ENCODE measurements at regions of chr4 and their contacts with region 1.

Region 1: DNA sequence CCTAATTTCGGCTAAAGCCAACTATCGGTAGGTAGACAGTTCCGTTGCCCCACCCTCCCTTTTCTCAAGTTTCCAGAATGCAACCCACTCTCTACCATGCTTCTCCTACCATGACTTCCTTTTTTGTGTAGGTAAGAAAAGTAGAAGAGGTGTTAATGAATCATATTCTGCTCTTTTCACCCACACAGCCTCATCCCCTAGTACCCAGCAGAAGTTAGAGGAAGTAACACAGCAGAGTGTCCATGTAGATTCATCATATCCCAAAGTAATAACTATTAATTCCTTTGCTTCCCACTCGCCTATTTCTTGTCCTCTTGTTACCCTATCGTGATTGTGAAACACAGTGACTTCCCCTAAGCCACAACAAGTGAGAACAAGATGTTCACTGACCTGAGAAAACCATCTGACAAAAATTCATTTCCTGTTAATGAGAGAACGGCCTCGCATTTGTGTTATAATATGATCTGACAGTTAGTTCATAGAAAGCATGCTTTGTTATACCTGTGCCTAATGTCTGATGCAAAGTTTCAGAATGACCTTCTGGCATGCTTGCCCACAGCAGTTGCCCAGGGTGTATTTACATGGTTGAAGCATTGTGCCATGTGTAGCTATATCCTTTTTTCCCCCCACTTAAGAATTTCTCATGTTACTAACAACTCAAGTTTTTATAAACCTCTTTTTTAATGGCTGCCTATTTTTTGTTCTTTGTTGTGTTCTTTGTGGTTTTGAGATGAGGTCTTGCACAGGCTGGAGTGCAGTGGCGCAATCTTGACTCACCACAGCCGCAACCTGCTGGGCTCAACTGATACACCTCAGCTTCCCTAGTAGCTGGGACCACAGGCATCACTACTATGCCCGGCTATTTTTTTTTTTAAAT is 185.6 kb downstream of the RAP1GDS1 start:
- DNase-seq: peak; percentile 81
- H3K4me3 Mint-ChIP-seq: peak overlapping the region; percentile 48
- H3K27ac Mint-ChIP-seq: peak overlapping the region; percentile 87
- H3K4me1 Mint-ChIP-seq: peaks cover 35% of the 10 kb centered on the region
- H3K27me3 Mint-ChIP-seq: no peaks in the 10 kb centered on the region

Region 2: GRCh38 chr4:98143001-98143899 is 303.5 kb before region 1 on chr4 and contains the start of gene STPG2:
- CTCF ChIA-PET with region 1: no interaction called
- POLR2A ChIA-PET with region 1: no interaction called
- intact Hi-C with region 1: loop called (anchors 2 kb)
- DNase-seq: peak; percentile 95
- H3K4me3 Mint-ChIP-seq: peak within 1 kb of the TSS; percentile 95
- H3K27ac Mint-ChIP-seq: peak within 1 kb of the TSS; percentile 98
- H3K4me1 Mint-ChIP-seq: peaks cover 20% of the 10 kb centered on the region
- H3K27me3 Mint-ChIP-seq: no peaks in the 10 kb centered on the region
- total RNA-seq, gene STPG2: not detected

Region 3: DNA sequence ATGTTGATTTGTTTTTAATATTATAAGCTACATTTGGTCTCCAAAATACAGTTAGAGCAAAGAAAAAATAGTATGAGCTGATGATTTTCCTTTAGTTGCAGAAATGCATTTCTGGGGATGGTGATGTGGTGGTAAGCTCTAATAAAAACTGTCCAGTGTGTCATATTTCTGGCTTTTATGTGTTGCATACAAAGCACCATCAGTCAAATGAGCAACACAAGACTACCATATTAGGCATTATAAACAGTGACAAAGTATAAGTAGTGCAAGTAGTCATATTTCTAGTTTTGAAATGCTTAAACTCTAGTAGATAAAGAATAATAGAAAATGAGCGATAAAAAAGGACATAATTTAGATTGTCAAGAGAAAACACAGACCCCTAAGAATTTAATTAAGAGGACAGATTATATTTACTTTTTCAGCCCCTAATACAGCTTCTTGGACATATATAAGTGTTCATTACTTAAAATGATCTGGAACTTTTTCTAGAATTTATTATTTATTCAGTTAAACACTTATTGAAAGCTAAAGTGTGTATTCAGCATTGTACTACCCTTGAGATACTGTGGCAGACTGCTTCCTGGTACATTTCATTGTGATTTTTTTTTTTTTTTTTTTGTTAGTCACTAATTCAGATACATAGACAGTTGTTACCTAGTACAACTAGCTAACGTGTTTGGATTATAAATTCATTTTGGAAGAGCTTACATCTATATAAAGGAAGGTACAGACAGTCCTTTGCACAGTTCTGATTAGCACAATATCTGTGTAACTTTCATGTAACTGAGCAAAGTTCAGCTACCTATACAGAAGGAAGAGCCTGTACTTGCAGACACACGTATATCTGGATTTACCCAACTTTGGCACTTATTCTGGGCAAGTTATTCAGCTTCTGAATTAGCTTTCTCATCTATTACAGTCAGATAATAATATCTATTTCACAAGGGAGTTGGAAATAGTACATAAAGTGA is 163.2 kb before region 1 on chr4:
- CTCF ChIA-PET with region 1: no interaction called
- POLR2A ChIA-PET with region 1: no interaction called
- intact Hi-C with region 1: loop called (anchors 2 kb)
- DNase-seq: no peak
- H3K4me3 Mint-ChIP-seq: no peak overlapping the region
- H3K27ac Mint-ChIP-seq: no peak overlapping the region
- H3K4me1 Mint-ChIP-seq: peaks cover 39% of the 10 kb centered on the region
- H3K27me3 Mint-ChIP-seq: no peaks in the 10 kb centered on the region